Activated B cell treated with CpG ODN at 0.5 μM for 24 hours (primary cell): ENCODE measurements at regions of chr3 and their contacts with region 1.

Region 1: GRCh38 chr3:172595641-172596393 is 72.6 kb upstream of the TNFSF10 start:
- DNase-seq: no peak
- ATAC-seq: peak; percentile 53
- H3K4me3 Mint-ChIP-seq: peak overlapping the region; percentile 84
- H3K27ac Mint-ChIP-seq: peak overlapping the region; percentile 27
- H3K4me1 Mint-ChIP-seq: peaks cover 39% of the 10 kb centered on the region
- H3K27me3 Mint-ChIP-seq: no peaks in the 10 kb centered on the region
- CTCF ChIP-seq: peak; percentile 92

Region 2: GRCh38 chr3:172332256-172333041 is 263.4 kb before region 1 on chr3:
- CTCF ChIA-PET with region 1: interaction called, 15 read pairs
- POLR2A ChIA-PET with region 1: no interaction called
- intact Hi-C with region 1: loop called (anchors 1 kb)
- DNase-seq: peak; percentile 26
- ATAC-seq: peak; percentile 85
- H3K4me3 Mint-ChIP-seq: no peak overlapping the region
- H3K27ac Mint-ChIP-seq: no peak overlapping the region
- H3K4me1 Mint-ChIP-seq: no peaks in the 10 kb centered on the region
- H3K27me3 Mint-ChIP-seq: no peaks in the 10 kb centered on the region
- CTCF ChIP-seq: peak; percentile 97

Region 3: DNA sequence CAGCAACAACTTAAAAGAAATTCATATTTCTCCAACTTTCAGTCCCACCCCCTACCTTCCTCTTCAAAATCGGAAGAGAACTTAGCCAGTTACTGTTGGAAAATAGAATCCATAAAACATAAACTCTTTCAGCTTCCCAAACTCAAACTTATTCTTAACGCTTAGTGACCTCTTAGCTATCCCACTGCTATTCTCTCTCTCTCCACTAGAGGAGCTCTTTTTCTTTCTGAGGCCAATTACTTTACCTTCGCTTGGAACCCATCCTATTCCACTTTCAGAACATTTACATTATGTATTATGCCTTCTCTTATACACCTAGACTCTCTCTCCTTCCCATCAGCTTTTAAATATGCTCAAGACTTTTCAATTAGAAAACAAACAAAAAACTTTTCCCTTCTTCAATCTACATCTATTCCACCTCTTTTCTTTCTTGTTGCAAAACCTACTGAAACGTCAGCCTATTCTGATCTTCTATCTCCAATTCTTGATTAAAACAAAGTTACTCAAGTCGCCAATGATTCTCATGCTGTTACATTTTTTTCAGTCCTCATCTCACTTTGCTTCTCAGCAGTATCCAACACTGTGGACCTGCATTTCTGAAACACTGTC is 134.2 kb before region 1 on chr3:
- CTCF ChIA-PET with region 1: interaction called, 23 read pairs
- POLR2A ChIA-PET with region 1: no interaction called
- intact Hi-C with region 1: no loop called
- DNase-seq: no peak
- ATAC-seq: peak; percentile 61
- H3K4me3 Mint-ChIP-seq: no peak overlapping the region
- H3K27ac Mint-ChIP-seq: no peak overlapping the region
- H3K4me1 Mint-ChIP-seq: no peaks in the 10 kb centered on the region
- H3K27me3 Mint-ChIP-seq: peaks cover 10% of the 10 kb centered on the region
- CTCF ChIP-seq: peak; percentile 92

Region 4: DNA sequence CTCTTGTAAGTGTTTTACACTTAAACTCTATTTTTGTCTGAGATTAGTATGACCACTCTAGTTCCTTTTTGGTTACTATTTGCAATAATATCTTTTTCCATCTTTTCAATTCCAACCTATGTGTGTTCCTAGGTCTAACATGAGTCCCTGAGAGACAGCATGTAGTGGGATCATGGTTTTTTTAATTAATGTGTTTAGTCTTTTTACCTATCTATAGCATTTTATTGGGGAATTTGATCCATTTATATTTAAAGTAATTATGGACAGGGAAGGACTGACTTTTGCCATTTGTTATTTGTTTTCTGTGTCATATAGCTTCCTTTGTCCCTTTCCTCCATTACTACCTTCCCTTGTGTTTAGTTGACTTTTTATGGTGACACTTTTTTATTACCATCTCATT is 94.3 kb before region 1 on chr3:
- CTCF ChIA-PET with region 1: interaction called, 13 read pairs
- POLR2A ChIA-PET with region 1: no interaction called
- intact Hi-C with region 1: no loop called
- DNase-seq: no peak
- ATAC-seq: no peak
- H3K4me3 Mint-ChIP-seq: no peak overlapping the region
- H3K27ac Mint-ChIP-seq: no peak overlapping the region
- H3K4me1 Mint-ChIP-seq: no peaks in the 10 kb centered on the region
- H3K27me3 Mint-ChIP-seq: no peaks in the 10 kb centered on the region
- CTCF ChIP-seq: no peak

Region 5: DNA sequence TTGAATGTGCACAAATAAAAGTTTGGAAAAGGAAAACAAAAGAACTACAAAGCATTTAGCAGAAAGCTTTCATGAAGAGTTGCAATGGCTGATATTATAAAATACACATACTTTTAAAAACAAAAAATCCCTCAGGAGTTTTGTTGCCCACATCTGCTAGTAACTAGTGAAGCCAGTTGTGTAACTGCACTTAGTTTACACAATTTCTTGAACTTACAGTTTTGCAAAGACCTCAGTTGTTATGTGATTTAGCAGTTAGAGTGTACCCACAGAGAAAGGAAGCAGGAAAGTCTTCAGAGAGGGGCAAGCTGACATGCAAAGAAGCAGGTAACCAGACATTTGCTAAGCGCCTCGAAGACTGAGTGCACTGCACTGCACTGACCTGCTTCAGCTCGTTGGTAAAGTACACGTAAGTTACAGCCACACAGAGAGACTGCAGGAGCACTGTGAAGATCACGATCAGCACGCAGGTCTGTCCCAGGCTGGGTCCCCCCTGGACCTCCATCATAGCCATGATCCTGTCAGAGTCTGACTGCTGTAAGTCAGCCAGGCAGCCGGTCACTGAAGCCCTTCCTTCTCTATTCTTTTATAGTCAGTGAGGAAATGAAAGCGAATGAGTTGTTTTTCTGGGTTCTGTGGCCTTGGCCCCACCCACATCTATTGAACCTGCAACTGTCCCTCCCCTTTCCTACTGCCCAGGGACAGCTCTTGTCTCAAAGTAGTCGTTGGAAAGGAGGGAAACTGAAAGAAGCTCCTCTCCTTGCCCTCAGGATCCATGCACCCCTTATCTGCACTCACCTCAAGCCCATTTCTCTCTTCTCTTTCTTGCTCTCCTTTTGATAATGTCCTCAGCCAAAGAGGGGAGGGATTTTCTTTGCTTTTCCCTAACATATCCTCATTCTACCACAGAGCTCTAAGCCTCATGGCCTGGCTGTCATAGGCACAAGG is 72.7 kb before region 1 on chr3 and contains the start of gene TNFSF10:
- CTCF ChIA-PET with region 1: interaction called, 9 read pairs
- POLR2A ChIA-PET with region 1: interaction called, 8 read pairs
- intact Hi-C with region 1: loop called (anchors 1 kb)
- DNase-seq: peak; percentile 46
- ATAC-seq: peak; percentile 88
- H3K4me3 Mint-ChIP-seq: peak within 1 kb of the TSS; percentile 94
- H3K27ac Mint-ChIP-seq: peak within 1 kb of the TSS; percentile 93
- H3K4me1 Mint-ChIP-seq: peaks cover 51% of the 10 kb centered on the region
- H3K27me3 Mint-ChIP-seq: no peaks in the 10 kb centered on the region
- CTCF ChIP-seq: no peak
- total RNA-seq, gene TNFSF10: 7.2 and 7.4 TPM in 2 replicates